Activated CD8-positive, alpha-beta T cell treated with anti-CD3 and anti-CD28 coated beads for 36 hours (primary cell): ENCODE measurements at regions of chr12 and their contacts with region 1.

Region 1: GRCh38 chr12:57846577-57847319 is at the start of gene CTDSP2:
- DNase-seq: peak; percentile 88
- ATAC-seq: peak; percentile 33
- H3K4me3 Mint-ChIP-seq: peak within 1 kb of the TSS; percentile 81
- H3K27ac Mint-ChIP-seq: peak within 1 kb of the TSS; percentile 92
- H3K4me1 Mint-ChIP-seq: peaks cover 49% of the 10 kb centered on the region
- H3K27me3 Mint-ChIP-seq: peaks cover 8% of the 10 kb centered on the region
- CTCF ChIP-seq: no peak
- total RNA-seq, gene CTDSP2: 67.1 to 67.2 TPM

Region 2: DNA sequence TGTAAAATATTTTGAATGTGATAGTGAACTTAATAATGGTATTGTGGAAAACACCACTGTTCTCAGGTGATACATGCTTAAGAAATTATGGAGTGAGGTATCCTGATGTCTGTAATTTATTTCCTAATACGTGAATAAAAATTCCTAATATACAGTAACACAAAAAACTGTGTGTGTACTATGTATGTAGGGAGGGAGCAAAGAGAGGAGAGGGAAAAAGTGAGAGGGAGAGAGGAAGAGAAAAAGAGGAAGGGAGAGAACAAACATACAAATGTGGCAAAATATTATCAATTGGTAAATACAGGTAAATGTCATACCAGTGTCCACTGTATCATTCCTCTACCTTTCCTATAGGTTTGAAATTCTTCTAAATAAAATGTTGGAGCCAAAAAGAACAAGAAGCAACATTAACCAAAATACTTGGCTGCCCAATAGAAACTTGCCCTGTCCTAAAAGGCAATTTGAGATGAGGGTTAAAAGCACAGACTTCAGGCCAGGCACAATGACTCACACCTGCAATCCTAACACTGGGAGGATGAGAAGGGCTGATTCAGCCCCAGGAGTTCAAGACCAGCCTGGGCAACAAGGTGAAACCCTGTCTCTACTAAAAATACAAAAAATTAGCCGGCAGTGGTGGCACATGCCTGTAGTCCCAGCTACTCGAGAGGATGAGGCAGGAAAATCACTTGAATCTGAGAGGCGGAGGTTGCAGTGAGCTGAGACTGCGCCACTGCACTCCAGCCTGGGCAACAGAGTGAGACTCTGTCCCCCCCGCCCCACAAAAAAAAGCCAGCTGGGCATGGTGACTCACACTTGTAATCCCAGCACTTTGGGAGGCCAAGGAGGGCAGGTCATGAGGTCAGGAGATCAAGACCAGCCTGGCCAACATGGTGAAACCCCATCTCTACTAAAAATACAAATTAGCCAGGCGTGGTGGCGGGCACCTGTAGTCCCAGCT is 430.4 kb before region 1 on chr12:
- CTCF ChIA-PET with region 1: no interaction called
- POLR2A ChIA-PET with region 1: no interaction called
- intact Hi-C with region 1: no loop called
- DNase-seq: no peak
- ATAC-seq: no peak
- H3K4me3 Mint-ChIP-seq: no peak overlapping the region
- H3K27ac Mint-ChIP-seq: no peak overlapping the region
- H3K4me1 Mint-ChIP-seq: peaks cover 35% of the 10 kb centered on the region
- H3K27me3 Mint-ChIP-seq: no peaks in the 10 kb centered on the region
- CTCF ChIP-seq: no peak

Region 3: DNA sequence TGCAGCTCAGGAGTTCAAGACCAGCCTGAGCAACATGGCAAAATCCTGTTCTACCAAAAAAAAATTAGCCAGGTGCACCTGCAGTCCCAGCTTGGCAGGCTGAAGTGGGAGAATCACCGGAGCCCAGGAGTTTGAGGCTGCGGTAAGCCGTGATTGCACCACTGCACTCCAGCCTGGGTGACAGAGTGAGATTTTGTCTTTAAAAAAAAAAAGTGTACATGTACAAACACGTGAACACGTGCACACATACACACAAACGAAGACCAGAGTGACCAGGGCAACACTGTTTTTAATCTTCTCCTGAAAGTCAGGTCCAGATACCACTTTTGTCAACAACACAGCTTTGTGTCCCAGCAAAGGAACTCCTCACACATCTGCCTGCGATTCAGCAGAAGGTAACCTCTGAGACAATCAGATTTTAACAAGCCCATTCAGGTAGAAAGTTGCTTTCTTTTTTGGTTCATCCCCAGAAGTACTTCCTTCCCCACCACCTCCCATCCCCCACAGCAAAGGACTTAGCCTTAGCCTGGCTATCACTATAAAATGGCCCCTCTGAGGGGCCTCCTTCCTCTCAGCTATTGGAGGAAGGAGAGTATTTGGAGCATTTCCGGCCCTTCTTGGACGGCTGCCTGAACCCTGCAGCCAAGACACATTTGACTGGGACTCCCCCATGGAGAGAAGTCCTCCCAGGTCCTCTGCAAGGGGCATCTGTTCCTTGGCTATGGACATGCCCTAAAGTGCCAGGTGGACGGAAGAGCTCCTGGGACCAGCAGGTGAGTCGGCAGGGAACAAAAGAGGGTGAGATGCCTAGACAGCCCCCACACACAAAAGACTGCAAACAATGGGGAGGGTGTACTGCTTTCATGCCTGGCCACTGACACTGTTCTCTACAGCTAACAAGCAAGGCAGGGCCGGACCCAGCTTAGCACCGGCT is 10.0 kb before region 1 on chr12:
- CTCF ChIA-PET with region 1: interaction called, 32 read pairs
- POLR2A ChIA-PET with region 1: interaction called, 84 read pairs
- intact Hi-C with region 1: no loop called
- DNase-seq: peak; percentile 79
- ATAC-seq: peak; percentile 70
- H3K4me3 Mint-ChIP-seq: peak overlapping the region; percentile 62
- H3K27ac Mint-ChIP-seq: peak overlapping the region; percentile 91
- H3K4me1 Mint-ChIP-seq: peaks cover 90% of the 10 kb centered on the region
- H3K27me3 Mint-ChIP-seq: no peaks in the 10 kb centered on the region
- CTCF ChIP-seq: no peak

Region 4: GRCh38 chr12:57865090-57865751 is 18.5 kb after region 1 on chr12:
- CTCF ChIA-PET with region 1: interaction called, 8 read pairs
- POLR2A ChIA-PET with region 1: interaction called, 13 read pairs
- intact Hi-C with region 1: no loop called
- DNase-seq: peak; percentile 87
- ATAC-seq: peak; percentile 96
- H3K4me3 Mint-ChIP-seq: peak overlapping the region; percentile 70
- H3K27ac Mint-ChIP-seq: peak overlapping the region; percentile 45
- H3K4me1 Mint-ChIP-seq: peaks cover 6% of the 10 kb centered on the region
- H3K27me3 Mint-ChIP-seq: peaks cover 6% of the 10 kb centered on the region
- CTCF ChIP-seq: no peak

Region 5: GRCh38 chr12:57927086-57927485 is 80.3 kb after region 1 on chr12:
- CTCF ChIA-PET with region 1: no interaction called
- POLR2A ChIA-PET with region 1: no interaction called
- intact Hi-C with region 1: no loop called
- DNase-seq: no peak
- ATAC-seq: no peak
- H3K4me3 Mint-ChIP-seq: no peak overlapping the region
- H3K27ac Mint-ChIP-seq: no peak overlapping the region
- H3K4me1 Mint-ChIP-seq: no peaks in the 10 kb centered on the region
- H3K27me3 Mint-ChIP-seq: no peaks in the 10 kb centered on the region
- CTCF ChIP-seq: no peak

Region 6: GRCh38 chr12:58268069-58268468 is 421.3 kb after region 1 on chr12:
- CTCF ChIA-PET with region 1: no interaction called
- POLR2A ChIA-PET with region 1: no interaction called
- intact Hi-C with region 1: no loop called
- DNase-seq: no peak
- ATAC-seq: no peak
- H3K4me3 Mint-ChIP-seq: no peak overlapping the region
- H3K27ac Mint-ChIP-seq: no peak overlapping the region
- H3K4me1 Mint-ChIP-seq: no peaks in the 10 kb centered on the region
- H3K27me3 Mint-ChIP-seq: peaks cover 1% of the 10 kb centered on the region
- CTCF ChIP-seq: no peak